WTC11 (cell line): ENCODE measurements at regions of chr22 and their contacts with region 1.

Region 1: GRCh38 chr22:19679522-19680101 is 34.7 kb upstream of the SEPTIN5 start:
- DNase-seq: peak; percentile 91
- ATAC-seq: peak; percentile 95
- H3K4me3 Mint-ChIP-seq: no peak overlapping the region
- H3K27ac Mint-ChIP-seq: no peak overlapping the region
- H3K4me1 Mint-ChIP-seq: peaks cover 11% of the 10 kb centered on the region
- H3K27me3 Mint-ChIP-seq: peaks cover 4% of the 10 kb centered on the region
- CTCF ChIP-seq: peak; percentile 95

Region 2: DNA sequence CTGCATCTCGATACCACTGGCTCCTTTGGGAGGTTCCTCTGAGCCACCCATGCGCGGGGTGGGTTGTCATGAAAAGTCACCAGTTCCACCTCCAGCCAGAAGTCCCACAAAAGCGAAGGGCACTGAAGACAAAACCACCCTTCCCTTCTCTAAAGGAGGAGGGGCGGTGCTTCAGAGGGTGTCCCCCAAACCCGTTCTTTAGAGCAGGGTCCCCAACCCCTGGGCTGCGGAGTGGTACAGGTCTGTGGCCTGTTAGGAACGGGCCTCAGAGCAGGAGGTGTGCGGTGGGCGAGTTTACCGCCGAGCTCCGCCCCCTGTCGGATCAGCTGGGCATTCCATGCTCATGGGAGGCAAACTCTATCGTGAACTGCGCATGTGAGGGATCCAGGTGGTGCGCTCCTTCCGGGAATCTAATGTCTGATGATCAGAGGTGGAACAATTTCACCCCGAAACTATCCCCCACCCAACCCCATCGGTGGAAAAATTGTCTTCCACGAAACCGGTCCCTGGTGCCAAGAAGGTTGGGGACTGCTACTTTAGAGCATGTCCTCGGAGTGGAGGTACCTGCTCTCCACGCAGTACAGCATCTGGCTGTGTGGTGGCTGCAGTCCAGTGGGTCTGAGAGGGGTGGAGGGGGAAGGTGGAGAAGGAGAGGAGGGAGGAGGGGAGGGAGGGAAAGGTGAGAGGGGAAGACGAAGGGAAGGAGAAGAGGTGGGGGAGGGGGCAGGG is 38.2 kb before region 1 on chr22:
- CTCF ChIA-PET with region 1: interaction called, 14 read pairs
- POLR2A ChIA-PET with region 1: no interaction called
- DNase-seq: peak; percentile 85
- ATAC-seq: peak; percentile 95
- H3K4me3 Mint-ChIP-seq: peak overlapping the region; percentile 47
- H3K27ac Mint-ChIP-seq: no peak overlapping the region
- H3K4me1 Mint-ChIP-seq: peaks cover 13% of the 10 kb centered on the region
- H3K27me3 Mint-ChIP-seq: peaks cover 15% of the 10 kb centered on the region
- CTCF ChIP-seq: peak; percentile 69

Region 3: DNA sequence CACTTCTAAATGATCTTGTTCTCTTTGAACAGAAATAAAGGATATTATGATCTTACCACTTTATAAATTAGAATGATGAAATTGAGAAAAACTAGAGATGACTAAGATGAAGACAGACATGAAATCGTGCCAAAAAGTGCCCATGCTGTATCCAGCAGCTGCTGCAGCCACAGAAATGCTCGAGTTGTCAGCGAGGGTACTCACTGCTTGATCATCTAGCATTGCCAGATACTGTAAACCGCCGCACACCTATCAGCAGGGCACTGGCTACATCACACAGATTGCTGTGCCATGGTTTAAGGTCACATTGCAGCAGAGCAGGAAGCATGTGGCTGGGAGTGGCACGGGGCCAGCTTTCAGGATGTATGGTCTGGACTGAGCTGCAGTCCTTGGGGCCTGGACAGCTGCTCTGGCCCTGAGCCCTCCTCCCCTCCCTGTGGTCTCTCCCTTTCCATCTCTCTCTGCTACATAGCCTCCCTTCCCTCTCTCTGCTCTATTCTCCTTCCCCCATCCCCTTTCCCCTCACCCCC is 16.3 kb before region 1 on chr22:
- CTCF ChIA-PET with region 1: interaction called, 70 read pairs
- POLR2A ChIA-PET with region 1: no interaction called
- DNase-seq: no peak
- ATAC-seq: peak; percentile 18; the same call in 1 of the 2 replicates
- H3K4me3 Mint-ChIP-seq: no peak overlapping the region
- H3K27ac Mint-ChIP-seq: no peak overlapping the region
- H3K4me1 Mint-ChIP-seq: peaks cover 15% of the 10 kb centered on the region
- H3K27me3 Mint-ChIP-seq: peaks cover 10% of the 10 kb centered on the region
- CTCF ChIP-seq: no peak

Region 4: DNA sequence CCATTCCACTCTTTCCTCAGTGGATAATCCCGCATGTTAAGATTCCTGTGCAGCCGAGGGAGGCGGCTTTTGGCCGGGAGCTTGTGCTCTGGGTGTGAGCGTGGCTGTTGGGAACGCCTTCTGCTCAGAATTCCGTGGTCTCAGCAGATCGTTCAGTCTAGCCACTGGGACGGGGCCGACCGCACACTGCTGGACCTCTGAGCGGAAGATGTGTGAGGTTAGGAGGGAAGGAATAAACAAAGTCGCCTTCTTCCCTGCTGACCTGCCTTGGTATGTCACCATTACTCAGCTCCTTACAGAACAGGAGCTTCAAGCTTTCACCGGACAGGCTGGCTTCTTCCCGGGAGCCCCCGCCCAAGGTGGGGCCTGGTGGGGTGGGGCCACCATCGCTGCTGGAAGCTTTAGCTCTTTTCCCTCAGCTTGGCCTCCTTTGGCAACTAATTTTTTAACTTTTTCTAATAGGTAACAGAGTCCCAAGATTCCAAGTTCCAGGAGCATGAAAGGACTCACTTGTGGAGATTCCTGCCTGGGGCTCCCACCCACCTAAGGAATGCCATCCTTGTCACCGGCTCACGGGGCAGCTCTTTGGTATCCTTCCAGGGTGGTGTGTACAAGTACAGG is 12.2 kb after region 1 on chr22:
- CTCF ChIA-PET with region 1: interaction called, 51 read pairs
- POLR2A ChIA-PET with region 1: no interaction called
- DNase-seq: no peak
- ATAC-seq: peak; percentile 10
- H3K4me3 Mint-ChIP-seq: no peak overlapping the region
- H3K27ac Mint-ChIP-seq: no peak overlapping the region
- H3K4me1 Mint-ChIP-seq: peaks cover 27% of the 10 kb centered on the region
- H3K27me3 Mint-ChIP-seq: peaks cover 4% of the 10 kb centered on the region; the same call in 1 of the 2 replicates
- CTCF ChIP-seq: no peak

Region 5: GRCh38 chr22:19705181-19705934 is 25.7 kb after region 1 on chr22:
- CTCF ChIA-PET with region 1: interaction called, 62 read pairs
- POLR2A ChIA-PET with region 1: no interaction called
- DNase-seq: peak; percentile 91
- ATAC-seq: peak; percentile 90
- H3K4me3 Mint-ChIP-seq: no peak overlapping the region
- H3K27ac Mint-ChIP-seq: peak overlapping the region; percentile 72; the same call in 1 of the 2 replicates
- H3K4me1 Mint-ChIP-seq: peaks cover 40% of the 10 kb centered on the region
- H3K27me3 Mint-ChIP-seq: peaks cover 3% of the 10 kb centered on the region
- CTCF ChIP-seq: 0 out of 2 replicates have a peak, but pooled peaks have one; percentile 23

Region 6: DNA sequence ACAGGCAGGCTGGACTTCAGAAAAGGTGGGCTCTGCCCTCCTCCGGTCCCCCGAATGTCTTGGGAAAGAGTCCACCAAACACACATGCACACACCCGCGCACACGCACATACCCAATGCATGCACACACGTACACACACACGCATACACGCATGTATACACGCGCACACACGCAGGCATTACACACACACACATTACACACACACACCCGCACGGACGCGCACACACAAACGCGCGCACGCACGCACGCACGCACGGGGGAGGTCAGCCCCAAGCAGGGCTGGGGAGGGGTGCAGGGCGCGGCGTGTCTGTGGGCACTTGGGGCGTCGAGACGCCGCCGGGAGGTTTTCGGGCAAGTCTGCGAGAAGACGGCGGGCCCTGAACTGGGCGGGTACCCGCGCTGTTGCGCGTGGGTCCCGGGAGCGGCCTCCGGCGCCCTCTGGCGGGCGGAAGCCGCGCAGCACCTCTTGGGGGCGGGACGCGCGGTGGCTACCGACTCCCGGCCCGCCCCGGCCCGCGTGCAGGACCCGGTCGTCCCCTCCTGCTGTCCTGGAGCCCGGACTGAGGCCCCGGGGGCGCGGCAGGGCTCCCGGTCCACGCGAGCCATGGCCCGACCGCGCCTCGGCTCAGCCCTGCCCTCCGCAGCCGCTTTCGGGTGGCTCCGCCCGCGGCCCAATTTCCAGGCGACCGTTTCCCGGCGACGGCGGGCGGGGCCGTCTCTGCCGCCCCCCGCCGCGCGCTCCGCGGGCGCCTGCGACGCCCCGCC is 38.3 kb after region 1 on chr22:
- CTCF ChIA-PET with region 1: interaction called, 63 read pairs
- POLR2A ChIA-PET with region 1: no interaction called
- DNase-seq: peak; percentile 70
- ATAC-seq: peak; percentile 29
- H3K4me3 Mint-ChIP-seq: peak overlapping the region; percentile 62
- H3K27ac Mint-ChIP-seq: no peak overlapping the region
- H3K4me1 Mint-ChIP-seq: peaks cover 21% of the 10 kb centered on the region
- H3K27me3 Mint-ChIP-seq: peaks cover 80% of the 10 kb centered on the region
- CTCF ChIP-seq: peak; percentile 95

Region 7: DNA sequence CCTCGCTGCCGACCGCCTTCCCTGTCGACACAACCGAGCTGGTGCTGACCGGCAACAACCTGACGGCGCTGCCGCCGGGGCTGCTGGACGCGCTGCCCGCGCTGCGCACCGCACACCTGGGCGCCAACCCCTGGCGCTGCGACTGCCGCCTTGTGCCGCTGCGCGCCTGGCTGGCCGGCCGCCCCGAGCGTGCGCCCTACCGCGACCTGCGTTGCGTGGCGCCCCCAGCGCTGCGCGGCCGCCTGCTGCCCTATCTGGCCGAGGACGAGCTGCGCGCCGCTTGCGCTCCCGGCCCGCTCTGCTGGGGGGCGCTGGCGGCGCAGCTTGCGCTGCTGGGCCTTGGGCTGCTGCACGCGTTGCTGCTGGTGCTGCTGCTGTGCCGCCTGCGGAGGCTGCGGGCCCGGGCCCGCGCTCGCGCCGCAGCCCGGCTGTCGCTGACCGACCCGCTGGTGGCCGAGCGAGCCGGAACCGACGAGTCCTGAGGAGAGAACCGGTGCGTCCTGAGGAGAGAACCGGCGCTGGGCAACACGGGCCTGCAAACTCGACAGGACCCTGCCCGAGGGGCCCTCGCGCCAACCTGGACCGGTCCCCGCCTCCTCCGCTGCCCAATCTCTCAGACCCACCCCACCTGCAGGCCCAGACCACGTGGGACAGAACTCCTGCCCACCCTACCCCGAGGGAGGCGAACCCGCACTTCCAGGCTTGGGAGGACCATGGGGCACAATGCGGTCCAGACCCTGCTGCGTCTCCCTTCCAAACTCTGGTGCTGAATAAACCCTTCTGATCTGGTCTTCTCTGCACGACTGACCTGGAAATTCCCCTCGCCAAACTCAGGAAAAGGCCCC is 44.6 kb after region 1 on chr22:
- CTCF ChIA-PET with region 1: interaction called, 57 read pairs
- POLR2A ChIA-PET with region 1: no interaction called
- DNase-seq: peak; percentile 76
- ATAC-seq: peak; percentile 68
- H3K4me3 Mint-ChIP-seq: peak overlapping the region; percentile 53
- H3K27ac Mint-ChIP-seq: no peak overlapping the region
- H3K4me1 Mint-ChIP-seq: peaks cover 20% of the 10 kb centered on the region
- H3K27me3 Mint-ChIP-seq: peaks cover 95% of the 10 kb centered on the region
- CTCF ChIP-seq: peak; percentile 27; the same call in 1 of the 2 replicates